IMR-90 (cell line): ENCODE measurements at regions of chr4 and their contacts with region 1.

Region 1: GRCh38 chr4:99054428-99054994 is 34.1 kb downstream of the ADH5 start:
- DNase-seq: no peak
- ATAC-seq: no peak
- H3K4me3 ChIP-seq: no peak overlapping the region
- H3K27ac ChIP-seq: no peak overlapping the region
- H3K4me1 ChIP-seq: peaks cover 5% of the 10 kb centered on the region
- H3K27me3 ChIP-seq: no peaks in the 10 kb centered on the region
- CTCF ChIP-seq: no peak
- POLR2A ChIP-seq: no peak
- RAD21 ChIP-seq: no peak

Region 2: GRCh38 chr4:98150092-98150761 is 904.3 kb before region 1 on chr4:
- CTCF ChIA-PET with region 1: no interaction called
- POLR2A ChIA-PET with region 1: no interaction called
- dilution Hi-C with region 1: no loop called
- in situ Hi-C with region 1: loop called (anchors 10 kb)
- intact Hi-C with region 1: loop called (anchors 1 kb)
- DNase-seq: peak; percentile 16
- ATAC-seq: peak; percentile 59
- H3K4me3 ChIP-seq: no peak overlapping the region
- H3K27ac ChIP-seq: peak overlapping the region; percentile 29; the same call in 1 of the 2 replicates
- H3K4me1 ChIP-seq: peaks cover 2% of the 10 kb centered on the region; the same call in 1 of the 2 replicates
- H3K27me3 ChIP-seq: no peaks in the 10 kb centered on the region
- CTCF ChIP-seq: peak; percentile 45
- POLR2A ChIP-seq: no peak
- RAD21 ChIP-seq: peak; percentile 50

Region 3: GRCh38 chr4:98688411-98689290 is 365.9 kb before region 1 on chr4:
- CTCF ChIA-PET with region 1: no interaction called
- POLR2A ChIA-PET with region 1: no interaction called
- dilution Hi-C with region 1: no loop called
- in situ Hi-C with region 1: no loop called
- intact Hi-C with region 1: no loop called
- DNase-seq: peak; percentile 70
- ATAC-seq: peak; percentile 87
- H3K4me3 ChIP-seq: no peak overlapping the region
- H3K27ac ChIP-seq: peak overlapping the region; percentile 58; the same call in 1 of the 2 replicates
- H3K4me1 ChIP-seq: peaks cover 3% of the 10 kb centered on the region
- H3K27me3 ChIP-seq: no peaks in the 10 kb centered on the region
- CTCF ChIP-seq: no peak
- POLR2A ChIP-seq: no peak
- RAD21 ChIP-seq: no peak

Region 4: GRCh38 chr4:98745366-98745765 is 309.1 kb before region 1 on chr4:
- CTCF ChIA-PET with region 1: interaction called, 4 read pairs
- POLR2A ChIA-PET with region 1: no interaction called
- dilution Hi-C with region 1: no loop called
- in situ Hi-C with region 1: no loop called
- intact Hi-C with region 1: loop called (anchors 2 kb)
- DNase-seq: peak; percentile 15
- ATAC-seq: peak; percentile 52
- H3K4me3 ChIP-seq: no peak overlapping the region
- H3K27ac ChIP-seq: no peak overlapping the region
- H3K4me1 ChIP-seq: peaks cover 4% of the 10 kb centered on the region; the same call in 1 of the 2 replicates
- H3K27me3 ChIP-seq: no peaks in the 10 kb centered on the region; the same call in 1 of the 2 replicates
- CTCF ChIP-seq: peak; percentile 52
- POLR2A ChIP-seq: no peak
- RAD21 ChIP-seq: peak; percentile 54

Region 5: DNA sequence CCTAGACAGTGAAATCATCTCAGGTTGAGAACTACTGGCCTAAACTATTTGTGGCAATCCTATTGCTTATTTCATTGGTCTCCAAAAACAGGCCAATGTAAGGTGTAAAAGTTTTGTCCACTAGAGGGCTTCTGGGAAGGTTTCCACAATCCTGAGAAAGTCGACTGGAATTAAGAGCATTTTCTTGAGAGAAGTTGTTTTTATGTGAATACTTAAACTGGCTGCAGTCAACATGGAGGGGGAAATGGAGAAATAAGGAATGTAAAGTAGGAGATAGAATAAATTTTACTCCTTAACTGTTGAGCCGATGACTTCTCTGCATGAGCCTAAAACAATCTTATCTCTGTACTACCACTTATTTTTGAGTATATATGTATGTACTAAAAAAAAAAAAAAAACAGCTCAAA is 114.6 kb before region 1 on chr4:
- CTCF ChIA-PET with region 1: no interaction called
- POLR2A ChIA-PET with region 1: no interaction called
- dilution Hi-C with region 1: no loop called
- in situ Hi-C with region 1: no loop called
- intact Hi-C with region 1: loop called (anchors 1 kb)
- DNase-seq: peak; percentile 80
- ATAC-seq: peak; percentile 80
- H3K4me3 ChIP-seq: no peak overlapping the region
- H3K27ac ChIP-seq: no peak overlapping the region
- H3K4me1 ChIP-seq: peaks cover 2% of the 10 kb centered on the region; the same call in 1 of the 2 replicates
- H3K27me3 ChIP-seq: no peaks in the 10 kb centered on the region
- CTCF ChIP-seq: peak; percentile 76
- POLR2A ChIP-seq: no peak
- RAD21 ChIP-seq: peak; percentile 61

Region 6: DNA sequence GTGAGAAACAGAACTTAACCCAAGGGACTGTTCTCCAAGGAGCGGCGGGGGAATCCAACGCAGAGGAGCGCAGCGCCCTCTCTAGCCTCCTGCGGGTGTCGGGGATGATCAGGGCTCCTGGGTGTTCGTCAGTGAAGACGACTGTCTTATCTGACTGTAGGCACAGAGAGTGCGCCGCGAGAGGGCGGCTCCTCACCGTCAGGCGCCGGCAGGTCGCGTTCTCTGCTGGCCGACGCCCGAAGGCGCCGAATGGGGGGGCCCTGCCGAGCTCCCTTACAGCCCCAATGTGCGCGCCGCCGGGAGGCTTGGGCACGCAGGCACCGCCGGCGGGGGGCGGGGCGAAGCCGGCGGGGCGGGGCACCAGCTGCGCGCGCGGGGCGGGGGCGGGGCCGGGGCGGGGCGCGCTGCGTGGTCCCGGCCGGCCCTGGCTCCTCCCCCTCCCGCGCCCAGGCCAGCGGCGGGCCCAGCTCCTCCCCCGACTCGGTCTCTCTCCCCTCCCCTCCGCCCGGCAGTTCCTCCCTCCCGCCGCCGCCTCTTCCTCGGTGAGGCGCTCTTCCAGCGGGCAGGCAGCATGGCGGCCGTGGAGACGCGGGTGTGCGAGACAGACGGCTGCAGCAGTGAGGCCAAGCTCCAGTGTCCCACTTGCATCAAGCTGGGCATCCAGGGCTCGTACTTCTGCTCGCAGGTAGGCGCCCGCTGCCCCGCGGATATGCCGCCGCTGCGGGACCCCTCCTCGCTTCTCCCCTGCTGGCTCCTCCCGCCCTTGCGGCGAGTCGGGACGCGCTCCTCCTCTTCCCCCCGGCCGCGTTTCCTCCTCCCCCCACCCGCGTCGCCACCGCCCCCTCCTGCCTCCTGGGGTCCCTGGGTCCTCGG is 59.1 kb before region 1 on chr4 and contains the start of gene METAP1:
- CTCF ChIA-PET with region 1: interaction called, 16 read pairs
- POLR2A ChIA-PET with region 1: no interaction called
- dilution Hi-C with region 1: no loop called
- in situ Hi-C with region 1: no loop called
- intact Hi-C with region 1: loop called (anchors 1 kb)
- DNase-seq: peak; percentile 92
- ATAC-seq: peak; percentile 95
- H3K4me3 ChIP-seq: peak within 1 kb of the TSS; percentile 98
- H3K27ac ChIP-seq: peak within 1 kb of the TSS; percentile 98
- H3K4me1 ChIP-seq: no peaks in the 10 kb centered on the region
- H3K27me3 ChIP-seq: no peaks in the 10 kb centered on the region
- CTCF ChIP-seq: peak; percentile 73
- POLR2A ChIP-seq: peak; percentile 55; the same call in 1 of the 2 replicates
- RAD21 ChIP-seq: peak; percentile 67
- total RNA-seq, gene METAP1: 43.7 and 76.1 TPM in 2 replicates

Region 7: DNA sequence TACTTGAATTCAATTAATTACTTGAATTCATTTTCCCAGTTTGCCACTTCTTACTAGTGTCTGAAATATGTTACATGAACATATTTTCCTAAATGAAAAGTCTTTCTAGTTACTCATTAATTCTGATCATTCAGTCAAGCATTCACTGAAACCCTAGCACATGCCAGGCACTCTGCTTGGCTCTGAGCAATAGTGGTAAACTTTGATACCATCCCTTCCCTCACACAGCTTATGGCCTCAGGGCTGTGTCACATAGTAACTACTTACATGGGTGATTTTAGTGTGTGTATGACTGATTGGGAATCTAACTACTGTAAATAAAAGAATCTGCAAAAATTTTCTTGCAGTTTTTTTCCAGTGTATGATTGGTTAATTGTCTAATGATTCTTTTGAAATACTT is 26.3 kb before region 1 on chr4:
- CTCF ChIA-PET with region 1: no interaction called
- POLR2A ChIA-PET with region 1: no interaction called
- dilution Hi-C with region 1: no loop called
- in situ Hi-C with region 1: no loop called
- intact Hi-C with region 1: no loop called
- DNase-seq: peak; percentile 11
- ATAC-seq: peak; percentile 51
- H3K4me3 ChIP-seq: no peak overlapping the region
- H3K27ac ChIP-seq: no peak overlapping the region
- H3K4me1 ChIP-seq: peaks cover 6% of the 10 kb centered on the region; the same call in 1 of the 2 replicates
- H3K27me3 ChIP-seq: no peaks in the 10 kb centered on the region
- CTCF ChIP-seq: no peak
- POLR2A ChIP-seq: no peak
- RAD21 ChIP-seq: no peak

Region 8: DNA sequence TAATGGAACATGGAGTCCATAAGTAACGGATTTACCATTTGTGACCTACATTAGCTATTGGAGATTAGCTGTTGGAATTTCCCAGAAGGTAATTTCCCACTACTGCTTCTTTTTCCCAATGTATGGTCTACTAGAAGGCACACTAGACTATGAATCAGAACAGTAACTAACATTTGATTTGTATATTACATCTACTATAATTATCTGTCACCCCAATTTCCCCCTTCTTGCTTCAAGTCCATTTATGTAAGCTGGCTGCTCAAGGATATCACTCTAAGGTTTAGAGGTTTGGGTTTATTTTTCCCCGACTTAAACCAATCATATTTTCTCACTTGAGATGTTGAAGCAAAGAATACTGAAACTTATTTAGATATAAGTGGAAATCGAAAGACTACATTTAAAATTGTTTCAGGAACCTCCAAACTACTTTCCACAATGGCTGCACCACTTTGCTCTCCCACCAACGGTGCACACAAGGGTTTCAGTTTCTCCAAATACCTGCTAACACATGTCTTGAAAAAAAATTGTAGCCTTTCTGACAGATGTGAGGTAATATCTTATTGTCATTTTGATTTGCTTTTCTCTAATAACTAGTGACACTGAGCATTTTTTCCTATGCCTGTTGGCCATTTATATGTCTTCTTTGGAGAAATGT is 928.9 kb after region 1 on chr4:
- CTCF ChIA-PET with region 1: no interaction called
- POLR2A ChIA-PET with region 1: no interaction called
- dilution Hi-C with region 1: no loop called
- in situ Hi-C with region 1: no loop called
- intact Hi-C with region 1: no loop called
- DNase-seq: no peak
- ATAC-seq: no peak
- H3K4me3 ChIP-seq: no peak overlapping the region
- H3K27ac ChIP-seq: no peak overlapping the region
- H3K4me1 ChIP-seq: no peaks in the 10 kb centered on the region
- H3K27me3 ChIP-seq: no peaks in the 10 kb centered on the region
- CTCF ChIP-seq: no peak
- POLR2A ChIP-seq: no peak
- RAD21 ChIP-seq: no peak